ENCODE measurements at regions of chr18 and their contacts with region 1.

Region 1: DNA sequence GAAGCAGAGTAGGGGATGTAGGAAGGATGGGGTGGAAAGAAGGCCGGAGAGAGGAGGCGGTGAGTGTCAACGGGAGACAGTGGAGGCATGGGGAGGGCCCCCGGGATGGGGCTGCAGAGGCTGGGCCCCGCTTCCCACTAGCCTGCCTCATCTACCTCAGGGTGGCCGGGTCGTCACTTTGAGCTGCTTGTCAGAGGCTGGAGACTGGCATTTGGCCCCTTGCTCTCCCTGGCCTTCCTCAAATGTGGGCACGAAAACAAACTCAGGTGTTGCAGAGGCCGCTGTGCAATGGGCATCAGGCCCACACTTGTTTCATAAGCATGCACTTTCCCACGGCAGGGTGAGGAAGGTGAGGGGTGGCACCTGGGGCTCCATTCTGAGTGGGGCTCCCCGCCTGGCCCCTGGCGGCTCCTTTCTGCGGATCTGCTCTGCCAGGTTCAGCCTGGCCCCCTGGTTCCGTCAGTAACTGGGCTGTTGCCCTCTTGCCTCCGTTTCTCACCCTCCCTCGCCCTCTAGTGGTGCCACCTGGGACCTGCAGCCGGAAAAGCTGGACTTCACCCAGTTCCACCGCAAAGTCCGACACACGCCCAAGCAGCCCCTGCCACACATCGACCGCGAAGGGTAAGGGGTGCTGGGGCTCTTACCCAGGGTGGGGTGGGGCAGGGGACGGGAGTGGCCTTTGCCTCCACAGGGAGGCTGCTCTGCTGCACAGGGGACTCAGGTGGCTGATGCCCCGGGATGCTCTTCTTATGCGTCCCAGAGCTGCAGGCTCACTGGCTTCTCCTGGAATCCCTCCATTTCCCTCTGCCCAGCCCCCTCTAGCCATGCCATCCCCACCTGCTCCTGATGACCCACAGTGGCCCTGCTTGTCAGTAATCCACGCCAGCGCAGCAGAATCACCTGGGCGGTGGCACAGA is 125.4 kb downstream of the CTIF start:
- DNase-seq: peak; percentile 63 to 90 (median 87)
- ATAC-seq: peak; percentile 42 to 59
- H3K4me3 ChIP-seq: no peak overlapping the region
- H3K27ac ChIP-seq: no peak overlapping the region
- H3K4me1 ChIP-seq: peaks cover 8% of the 10 kb centered on the region
- H3K27me3 ChIP-seq: no peaks in the 10 kb centered on the region

Region 2: DNA sequence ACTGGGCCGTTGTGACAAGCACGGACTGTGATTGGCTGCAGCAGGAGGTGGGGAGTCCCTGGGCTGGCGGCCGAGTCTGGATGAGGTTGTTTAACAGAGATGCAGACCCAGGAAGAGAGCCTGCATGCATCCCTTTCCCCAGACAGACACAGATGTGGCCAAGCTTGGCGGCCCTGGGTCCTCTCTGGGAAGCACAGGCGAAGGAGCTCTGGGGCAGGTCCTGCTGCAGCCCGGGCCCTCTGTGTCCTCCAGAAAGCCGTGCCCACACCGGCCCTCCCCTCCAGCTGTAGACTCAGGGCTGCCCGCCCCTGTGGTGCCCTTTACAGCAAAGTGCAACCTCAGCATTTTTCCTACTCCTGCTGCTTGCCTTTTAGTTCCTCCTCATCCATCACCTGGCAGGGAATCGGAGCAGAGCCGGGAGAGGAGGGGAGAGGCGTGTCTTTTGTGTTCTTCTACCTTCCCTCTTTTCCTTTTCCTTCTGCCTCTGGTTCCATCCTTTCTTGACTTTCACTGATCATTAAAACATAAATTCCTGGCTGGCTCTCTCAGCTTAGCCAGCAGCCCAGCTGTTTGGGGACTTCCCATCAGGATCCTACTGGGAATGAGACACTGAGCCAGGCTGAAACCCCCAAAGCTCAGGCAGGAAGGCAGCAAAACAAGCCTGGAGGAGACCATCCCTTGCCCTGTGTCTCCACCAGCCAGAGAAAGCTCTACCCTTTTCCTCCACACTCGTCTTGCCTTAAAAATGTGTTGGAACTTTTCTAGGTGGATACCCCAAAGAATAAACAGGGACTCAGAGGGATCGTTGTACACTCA is 50.4 kb before region 1 on chr18:
- intact Hi-C with region 1: loop called in 1 of 4 experiments (anchors 10 kb)
- DNase-seq: peak; percentile 60 to 90 (median 89)
- ATAC-seq: peak; percentile 51 to 66
- H3K4me3 ChIP-seq: no peak overlapping the region
- H3K27ac ChIP-seq: no peak overlapping the region
- H3K4me1 ChIP-seq: peaks cover 22% of the 10 kb centered on the region
- H3K27me3 ChIP-seq: no peaks in the 10 kb centered on the region

Region 3: DNA sequence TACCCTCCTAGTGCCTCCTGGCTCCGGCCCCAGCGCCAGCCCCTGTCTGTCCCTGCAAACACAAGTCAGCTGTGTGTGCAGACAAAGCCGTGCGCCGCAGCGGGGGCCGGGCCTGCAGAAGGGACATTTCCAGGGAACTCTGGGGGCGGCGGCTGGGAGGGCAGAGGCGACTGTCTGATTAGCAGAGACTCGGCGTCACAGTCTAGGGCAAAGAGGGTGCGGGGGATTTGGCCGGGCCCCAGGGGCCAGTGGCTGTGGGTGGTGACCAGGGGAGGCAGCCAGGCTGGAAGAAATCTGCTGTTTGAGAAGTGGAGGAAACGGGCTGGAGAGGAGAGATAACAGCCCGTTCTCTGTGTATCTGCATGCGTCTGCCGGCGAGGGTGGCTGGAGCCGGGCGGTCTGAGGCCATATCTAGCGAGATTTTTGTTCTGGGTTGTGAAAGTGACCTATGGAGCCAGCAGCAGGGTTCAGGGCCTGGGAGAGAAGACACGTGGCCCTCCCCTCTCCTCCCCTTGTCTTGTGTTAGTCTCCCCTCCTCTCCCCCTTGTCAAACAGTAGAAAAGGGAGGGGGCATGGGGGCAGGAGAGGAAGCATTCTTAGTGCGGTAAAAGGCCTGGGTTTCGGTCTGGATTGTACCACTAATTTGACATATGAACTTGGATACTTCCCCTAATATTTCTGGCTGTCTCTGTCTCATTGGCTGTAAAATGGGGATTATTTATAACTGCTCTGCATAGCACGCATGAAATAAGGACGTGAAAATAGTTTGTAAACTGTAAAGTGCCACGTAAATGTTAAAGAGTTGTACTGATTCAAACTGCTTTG is 117.2 kb after region 1 on chr18:
- intact Hi-C with region 1: no loop called
- DNase-seq: peak; percentile 99 to 100 (median 100)
- ATAC-seq: peak; percentile 87 to 89
- H3K4me3 ChIP-seq: no peak overlapping the region
- H3K27ac ChIP-seq: peak overlapping the region; percentile 99
- H3K4me1 ChIP-seq: peaks cover 49% of the 10 kb centered on the region
- H3K27me3 ChIP-seq: no peaks in the 10 kb centered on the region

Region 4: GRCh38 chr18:49819823-49820671 is 1155.9 kb after region 1 on chr18:
- intact Hi-C with region 1: no loop called
- DNase-seq: no peak
- ATAC-seq: no peak
- H3K4me3 ChIP-seq: no peak overlapping the region
- H3K27ac ChIP-seq: no peak overlapping the region
- H3K4me1 ChIP-seq: peaks cover 5% of the 10 kb centered on the region
- H3K27me3 ChIP-seq: no peaks in the 10 kb centered on the region